Ascending aorta (tissue), 2 donors: ENCODE measurements at regions of chr1 and their contacts with region 1.

Region 1: DNA sequence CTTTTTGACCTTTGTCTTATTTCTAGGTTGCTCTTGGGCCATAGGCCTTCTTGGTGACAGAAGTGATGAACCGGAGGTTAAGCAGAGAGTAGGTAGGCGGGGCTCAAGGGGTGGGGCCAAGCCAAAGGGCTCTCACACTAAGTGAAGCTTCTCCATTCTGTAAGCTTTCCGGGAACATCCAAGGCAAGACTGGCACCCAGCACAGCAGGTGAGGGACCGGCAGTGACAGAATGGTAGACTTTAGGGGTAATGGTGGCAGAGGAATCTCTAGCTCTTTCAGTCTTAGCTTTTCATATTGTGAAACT is at the start of gene TNFAIP8L2:
- DNase-seq: no peak
- H3K4me3 ChIP-seq: peak within 1 kb of the TSS in 1 of 2 donors; percentile 52
- H3K27ac ChIP-seq: no peak within 1 kb of the TSS
- H3K4me1 ChIP-seq: peaks cover 0 to 8% of the 10 kb centered on the region in 2 donors
- H3K27me3 ChIP-seq: no peaks in the 10 kb centered on the region
- CTCF ChIP-seq: no peak
- total RNA-seq, gene TNFAIP8L2: not detected

Region 2: GRCh38 chr1:150995896-150996295 is 160.6 kb before region 1 on chr1:
- intact Hi-C with region 1: no loop called
- DNase-seq: no peak
- H3K4me3 ChIP-seq: no peak overlapping the region
- H3K27ac ChIP-seq: peak overlapping the region in 1 of 2 donors; percentile 3
- H3K4me1 ChIP-seq: no peaks in the 10 kb centered on the region
- H3K27me3 ChIP-seq: no peaks in the 10 kb centered on the region
- CTCF ChIP-seq: peak; percentile 77 to 81 (median 80)

Region 3: DNA sequence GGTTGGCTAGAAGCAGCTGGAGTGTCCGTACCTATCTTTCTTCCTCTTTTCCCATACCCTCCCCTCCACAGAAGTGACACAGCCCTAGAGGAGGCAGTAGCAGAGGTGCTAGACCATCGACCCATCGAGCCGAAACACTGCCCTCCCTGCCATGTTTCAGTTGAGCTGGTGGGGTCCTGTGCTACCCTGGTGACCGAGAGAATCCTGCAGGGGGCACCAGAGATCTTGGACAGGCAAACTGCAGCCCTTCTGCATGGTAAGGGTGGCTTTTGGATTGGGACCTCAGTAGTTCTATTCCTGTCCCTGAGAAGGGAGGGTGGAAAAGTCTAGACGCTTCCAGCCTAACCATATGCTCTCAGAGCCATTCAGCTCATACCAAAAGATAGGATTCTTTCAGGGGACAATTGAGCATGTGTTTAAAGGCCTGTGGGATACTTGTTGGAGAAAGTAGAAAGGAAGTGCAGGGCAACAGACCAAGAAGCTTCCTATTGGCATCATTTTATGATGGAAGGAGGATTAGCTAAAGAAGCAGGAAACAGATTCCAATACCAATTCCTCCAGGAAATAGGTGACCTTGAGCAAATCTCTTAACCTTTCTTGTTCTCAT is 131.8 kb before region 1 on chr1:
- intact Hi-C with region 1: loop called (anchors 1 kb)
- DNase-seq: peak in 1 of 2 donors; percentile 92
- H3K4me3 ChIP-seq: no peak overlapping the region
- H3K27ac ChIP-seq: peak overlapping the region; percentile 27 to 28
- H3K4me1 ChIP-seq: no peaks in the 10 kb centered on the region
- H3K27me3 ChIP-seq: no peaks in the 10 kb centered on the region
- CTCF ChIP-seq: peak; percentile 64 to 83 (median 80)

Region 4: GRCh38 chr1:151098126-151098525 is 58.3 kb before region 1 on chr1:
- intact Hi-C with region 1: loop called (anchors 1 kb)
- DNase-seq: no peak
- H3K4me3 ChIP-seq: no peak overlapping the region
- H3K27ac ChIP-seq: no peak overlapping the region
- H3K4me1 ChIP-seq: no peaks in the 10 kb centered on the region
- H3K27me3 ChIP-seq: no peaks in the 10 kb centered on the region
- CTCF ChIP-seq: no peak

Region 5: GRCh38 chr1:151130987-151131586 is 25.4 kb before region 1 on chr1:
- intact Hi-C with region 1: no loop called
- DNase-seq: peak in 1 of 2 donors; percentile 89
- H3K4me3 ChIP-seq: peak overlapping the region; percentile 45 to 62
- H3K27ac ChIP-seq: peak overlapping the region; percentile 25 to 44
- H3K4me1 ChIP-seq: no peaks in the 10 kb centered on the region
- H3K27me3 ChIP-seq: no peaks in the 10 kb centered on the region
- CTCF ChIP-seq: no peak